A673 (cell line): ENCODE measurements at regions of chr1 and their contacts with region 1.

Region 1: DNA sequence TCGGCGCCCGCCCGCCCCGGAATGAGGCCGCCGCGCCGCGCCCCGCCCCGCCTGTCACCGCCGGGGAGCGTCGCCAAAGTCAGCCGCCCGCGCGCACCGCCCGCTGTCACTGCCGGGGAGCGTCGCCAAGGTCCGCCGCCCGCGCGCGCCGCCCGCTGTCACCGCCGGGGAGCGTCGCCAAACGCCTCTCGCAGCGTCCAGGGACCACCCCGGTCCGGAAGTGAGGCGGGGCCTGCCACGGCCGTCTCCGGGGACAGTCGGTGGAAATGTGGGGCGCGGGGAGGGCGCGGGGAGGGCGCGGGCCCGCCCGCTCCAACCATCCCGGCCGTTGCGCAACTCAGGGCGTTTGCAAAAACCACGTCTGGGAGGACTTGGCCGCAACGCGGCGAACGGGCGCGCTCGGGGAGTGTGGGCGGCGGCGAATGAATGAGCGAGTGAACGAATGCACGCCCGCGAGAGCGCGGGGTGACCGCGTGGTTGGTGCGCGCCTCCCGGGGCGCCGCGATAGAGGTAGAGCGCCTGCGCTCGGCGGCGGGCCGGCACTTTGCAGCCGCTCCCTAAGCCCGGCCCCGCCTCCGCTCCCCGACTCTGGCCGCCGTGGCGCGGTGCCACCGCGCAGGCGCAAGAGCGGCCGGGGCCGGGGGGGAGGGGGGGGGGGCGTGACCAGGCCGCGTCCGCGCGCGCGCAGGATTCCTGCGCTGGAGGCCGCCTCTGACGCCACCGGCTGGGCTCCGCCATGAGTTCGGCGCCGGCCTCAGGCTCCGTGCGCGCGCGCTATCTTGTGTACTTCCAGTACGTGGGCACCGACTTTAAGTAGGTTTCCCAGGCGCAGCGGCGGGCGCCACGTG is at the starts of genes ACAP3 and PUSL1:
- DNase-seq: peak; percentile 96
- H3K4me3 ChIP-seq: peak within 1 kb of the TSS; percentile 88
- H3K27ac ChIP-seq: peak within 1 kb of the TSS; percentile 96
- H3K4me1 ChIP-seq: peaks cover 39% of the 10 kb centered on the region
- H3K27me3 ChIP-seq: no peaks in the 10 kb centered on the region
- CTCF ChIP-seq: no peak
- total RNA-seq, gene ACAP3: 67.6 and 71.9 TPM in 2 replicates
- total RNA-seq, gene PUSL1: 28.5 and 31.3 TPM in 2 replicates

Region 2: DNA sequence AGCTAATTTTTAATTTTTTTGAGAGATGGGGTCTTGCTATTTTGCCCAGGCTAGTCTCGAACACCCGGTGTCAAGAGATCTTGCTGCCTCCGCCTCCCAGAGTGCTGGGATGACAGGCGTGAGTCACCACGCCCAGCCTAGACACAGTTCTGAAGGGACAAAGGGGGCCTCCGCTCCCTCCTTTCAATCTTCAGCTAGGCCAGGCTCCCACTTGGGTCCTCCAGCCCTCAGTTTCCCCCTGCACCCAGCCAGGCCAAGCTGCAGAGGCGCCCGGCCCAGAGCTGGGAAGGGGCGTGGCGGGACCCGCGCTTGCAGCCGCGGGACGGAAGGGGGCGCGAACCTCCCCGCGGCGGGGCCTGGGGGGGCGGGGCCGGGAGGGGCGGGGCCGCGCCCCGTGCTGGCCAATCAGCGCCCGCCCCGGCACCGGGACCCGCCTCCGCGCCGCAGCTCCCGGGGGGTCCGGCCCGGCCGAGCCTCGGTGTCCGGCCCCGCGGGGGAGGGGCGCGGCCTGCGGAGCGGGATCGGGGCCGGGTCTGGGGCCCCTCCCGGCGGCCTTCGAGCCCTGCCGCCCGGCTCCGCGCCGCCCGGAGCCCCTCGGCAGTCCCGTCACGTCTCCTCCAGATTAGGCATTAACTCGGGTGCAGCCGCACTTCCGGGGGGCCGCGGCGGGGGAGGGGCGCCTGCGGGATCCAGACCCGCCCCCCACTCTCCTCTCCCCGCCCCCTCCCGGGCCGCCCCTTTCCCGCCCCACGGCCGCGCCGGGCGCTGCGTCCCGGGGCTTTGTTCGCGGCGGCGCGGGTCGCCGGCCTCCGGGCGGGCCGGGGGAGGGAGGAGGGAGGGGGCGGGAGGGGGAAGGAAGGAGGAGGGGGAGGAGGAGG is 288.8 kb before region 1 on chr1:
- CTCF ChIA-PET with region 1: no interaction called
- POLR2A ChIA-PET with region 1: no interaction called
- intact Hi-C with region 1: loop called (anchors 10 kb)
- DNase-seq: peak; percentile 88
- H3K4me3 ChIP-seq: peak overlapping the region; percentile 42
- H3K27ac ChIP-seq: no peak overlapping the region
- H3K4me1 ChIP-seq: peaks cover 44% of the 10 kb centered on the region
- H3K27me3 ChIP-seq: no peaks in the 10 kb centered on the region
- CTCF ChIP-seq: peak; percentile 50